ENCODE measurements at regions of chr18 and their contacts with region 1.

Region 1: GRCh38 chr18:21727702-21728101 is 12.9 kb upstream of the MIB1 start:
- DNase-seq: no peak
- H3K4me3 ChIP-seq: no peak overlapping the region
- H3K27ac ChIP-seq: no peak overlapping the region
- H3K27me3 ChIP-seq: no peaks in the 10 kb centered on the region
- CTCF ChIP-seq: no peak

Region 2: DNA sequence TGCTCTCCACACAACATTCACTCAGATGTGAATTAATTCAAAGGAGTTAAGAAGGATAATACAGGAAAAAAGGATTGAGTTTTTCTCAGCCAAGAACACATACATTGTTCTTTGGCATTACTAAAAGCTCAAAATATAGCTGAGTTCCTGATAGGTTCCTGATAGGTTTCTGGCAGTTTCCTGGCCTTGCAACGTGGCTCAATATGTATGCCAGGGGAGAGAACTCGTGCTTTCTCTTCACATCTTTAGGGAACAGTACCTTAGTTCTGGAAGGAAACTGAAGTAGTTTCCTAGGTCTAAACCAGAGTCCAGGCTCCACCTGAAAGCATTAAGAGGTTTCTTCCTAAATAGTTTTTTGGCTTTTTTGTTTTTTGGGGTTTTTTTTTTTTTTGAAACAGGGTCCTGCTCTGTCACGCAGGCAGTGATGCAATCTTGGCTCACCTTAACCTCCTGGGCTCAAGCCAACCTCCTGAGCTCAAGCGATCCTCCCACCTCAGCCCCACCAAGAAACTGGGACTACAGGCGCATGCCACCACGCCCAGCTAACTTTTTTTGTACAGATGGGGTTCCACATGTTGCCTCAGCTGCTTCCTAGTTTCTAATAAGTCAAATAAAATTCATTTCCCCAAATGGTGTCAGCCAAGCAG is 170.0 kb before region 1 on chr18:
- intact Hi-C with region 1: no loop called
- DNase-seq: no peak
- H3K4me3 ChIP-seq: no peak overlapping the region
- H3K27ac ChIP-seq: no peak overlapping the region
- H3K27me3 ChIP-seq: no peaks in the 10 kb centered on the region
- CTCF ChIP-seq: no peak

Region 3: DNA sequence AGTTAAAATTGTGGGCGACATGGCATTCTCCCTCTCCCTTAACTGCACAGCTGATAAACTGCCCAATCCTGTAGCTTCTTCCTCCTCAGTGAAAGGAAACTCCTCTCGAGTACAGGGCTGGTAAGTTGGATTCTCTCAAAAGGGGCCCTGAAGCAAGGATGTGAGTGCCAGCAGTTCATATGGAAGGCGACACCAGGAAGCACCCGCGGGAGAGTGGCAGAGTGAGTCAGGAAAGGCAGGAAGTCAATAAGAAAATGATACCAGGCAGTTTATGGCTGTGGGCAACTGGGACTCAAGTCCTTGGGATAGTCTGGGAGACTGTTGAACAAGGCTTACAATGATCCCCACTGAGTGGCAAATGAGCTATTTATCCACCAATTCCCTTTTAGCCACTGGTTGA is 58.0 kb before region 1 on chr18:
- intact Hi-C with region 1: loop called in 1 of 2 experiments (anchors 10 kb)
- DNase-seq: no peak
- H3K4me3 ChIP-seq: no peak overlapping the region
- H3K27ac ChIP-seq: no peak overlapping the region
- H3K27me3 ChIP-seq: no peaks in the 10 kb centered on the region
- CTCF ChIP-seq: no peak

Region 4: GRCh38 chr18:21798126-21798525 is 70.4 kb after region 1 on chr18:
- intact Hi-C with region 1: no loop called
- DNase-seq: no peak
- H3K4me3 ChIP-seq: no peak overlapping the region
- H3K27ac ChIP-seq: peak overlapping the region in 1 of 59 donors; percentile 12
- H3K27me3 ChIP-seq: no peaks in the 10 kb centered on the region
- CTCF ChIP-seq: no peak

Measured in dorsolateral prefrontal cortex (tissue), 120 donors.